ENCODE measurements at regions of chr19 and their contacts with region 1.

Region 1: GRCh38 chr19:18304458-18305310 is 18.2 kb downstream of the LSM4 start:
- DNase-seq: peak; percentile 80
- ATAC-seq: peak; percentile 87
- H3K4me3 ChIP-seq: peak overlapping the region; percentile 60 to 77 (median 61)
- H3K27ac ChIP-seq: peak overlapping the region; percentile 86
- H3K4me1 ChIP-seq: peaks cover 56% of the 10 kb centered on the region
- H3K27me3 ChIP-seq: no peaks in the 10 kb centered on the region
- CTCF ChIP-seq: peak; percentile 61
- EP300 ChIP-seq: peak in 1 of 2 experiments; percentile 35; a peak in 1 of 4 replicates
- POLR2A ChIP-seq: peak; percentile 70 to 72
- RAD21 ChIP-seq: no peak

Region 2: GRCh38 chr19:17847538-17848366 is 456.9 kb before region 1 on chr19 and contains the start of gene JAK3:
- CTCF ChIA-PET with region 1: no interaction called
- POLR2A ChIA-PET with region 1: no interaction called
- in situ Hi-C with region 1: no loop called
- intact Hi-C with region 1: no loop called
- DNase-seq: peak; percentile 59
- ATAC-seq: peak; percentile 83
- H3K4me3 ChIP-seq: peak within 1 kb of the TSS; percentile 50 to 64 (median 60)
- H3K27ac ChIP-seq: peak within 1 kb of the TSS; percentile 67
- H3K4me1 ChIP-seq: peaks cover 43% of the 10 kb centered on the region
- H3K27me3 ChIP-seq: no peaks in the 10 kb centered on the region; a peak in 1 of 5 replicates
- CTCF ChIP-seq: peak; percentile 16; the same call in 1 of the 2 replicates
- EP300 ChIP-seq: 0 out of 4 replicates have a peak, but pooled peaks of 1 of the 2 experiments have one; percentile 48
- POLR2A ChIP-seq: peak; percentile 22 to 79; a peak in 3 of 4 replicates
- RAD21 ChIP-seq: no peak
- total RNA-seq, gene JAK3: 2.8 and 3.4 TPM in 2 replicates

Region 3: DNA sequence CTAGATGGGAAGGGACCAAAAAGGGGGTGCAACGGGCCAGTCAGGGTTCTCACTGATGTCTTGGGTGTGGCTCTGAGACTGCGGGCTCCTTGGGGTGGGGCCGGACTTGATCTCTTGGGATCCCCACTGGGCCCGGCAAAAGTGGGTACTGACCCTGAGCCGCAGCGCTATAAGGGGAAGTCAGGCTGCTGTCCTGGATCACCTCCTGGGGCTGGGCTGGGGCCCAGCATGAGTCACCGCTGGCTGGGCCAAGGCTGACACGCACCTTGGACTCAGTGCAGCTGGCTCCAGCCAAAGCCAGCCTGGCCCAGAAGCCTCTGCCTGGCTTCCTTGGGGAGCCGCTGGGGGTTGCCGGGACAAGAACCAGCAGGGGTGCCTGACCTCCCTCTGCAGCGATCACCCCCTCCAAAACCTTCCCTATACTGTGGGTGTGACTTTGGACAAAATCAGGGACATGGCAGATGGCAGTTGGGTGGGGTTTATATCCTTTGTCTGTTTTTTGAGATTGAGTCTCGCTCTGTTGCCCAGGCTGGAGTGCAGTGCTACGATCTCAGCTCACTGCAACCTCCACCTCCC is 29.8 kb before region 1 on chr19:
- CTCF ChIA-PET with region 1: interaction called, 3 read pairs
- POLR2A ChIA-PET with region 1: interaction called, 187 read pairs
- in situ Hi-C with region 1: no loop called
- intact Hi-C with region 1: no loop called
- DNase-seq: peak; percentile 82
- ATAC-seq: peak; percentile 84
- H3K4me3 ChIP-seq: peak overlapping the region in 2 of 3 experiments; percentile 23 to 50; a peak in 3 of 6 replicates
- H3K27ac ChIP-seq: peak overlapping the region; percentile 73
- H3K4me1 ChIP-seq: peaks cover 66% of the 10 kb centered on the region
- H3K27me3 ChIP-seq: no peaks in the 10 kb centered on the region
- CTCF ChIP-seq: peak; percentile 42
- EP300 ChIP-seq: peak; percentile 44 to 61; a peak in 3 of 4 replicates
- POLR2A ChIP-seq: peak in 1 of 2 experiments; percentile 75
- RAD21 ChIP-seq: peak; percentile 39

Region 4: GRCh38 chr19:18291590-18292461 is 12.9 kb before region 1 on chr19:
- CTCF ChIA-PET with region 1: no interaction called
- POLR2A ChIA-PET with region 1: interaction called, 51 read pairs
- in situ Hi-C with region 1: no loop called
- intact Hi-C with region 1: no loop called
- DNase-seq: peak; percentile 51
- ATAC-seq: peak; percentile 67
- H3K4me3 ChIP-seq: peak overlapping the region; percentile 59 to 79 (median 63)
- H3K27ac ChIP-seq: peak overlapping the region; percentile 26
- H3K4me1 ChIP-seq: peaks cover 74% of the 10 kb centered on the region
- H3K27me3 ChIP-seq: no peaks in the 10 kb centered on the region
- CTCF ChIP-seq: no peak
- EP300 ChIP-seq: peak in 1 of 2 experiments; percentile 13; a peak in 1 of 4 replicates
- POLR2A ChIP-seq: no peak
- RAD21 ChIP-seq: 0 out of 2 replicates have a peak, but pooled peaks have one; percentile 4

Region 5: GRCh38 chr19:18322759-18323460 is 18.2 kb after region 1 on chr19 and contains the start of gene LSM4:
- CTCF ChIA-PET with region 1: interaction called, 3 read pairs
- POLR2A ChIA-PET with region 1: interaction called, 251 read pairs
- in situ Hi-C with region 1: no loop called
- intact Hi-C with region 1: loop called (anchors 1 kb)
- DNase-seq: peak; percentile 95
- ATAC-seq: peak; percentile 88
- H3K4me3 ChIP-seq: peak within 1 kb of the TSS; percentile 69 to 80 (median 72)
- H3K27ac ChIP-seq: peak within 1 kb of the TSS; percentile 84
- H3K4me1 ChIP-seq: peaks cover 73% of the 10 kb centered on the region
- H3K27me3 ChIP-seq: no peaks in the 10 kb centered on the region
- CTCF ChIP-seq: peak; percentile 59
- EP300 ChIP-seq: no peak
- POLR2A ChIP-seq: peak; percentile 66 to 69
- RAD21 ChIP-seq: peak; percentile 51
- total RNA-seq, gene LSM4: 166 and 188 TPM in 2 replicates

Region 6: DNA sequence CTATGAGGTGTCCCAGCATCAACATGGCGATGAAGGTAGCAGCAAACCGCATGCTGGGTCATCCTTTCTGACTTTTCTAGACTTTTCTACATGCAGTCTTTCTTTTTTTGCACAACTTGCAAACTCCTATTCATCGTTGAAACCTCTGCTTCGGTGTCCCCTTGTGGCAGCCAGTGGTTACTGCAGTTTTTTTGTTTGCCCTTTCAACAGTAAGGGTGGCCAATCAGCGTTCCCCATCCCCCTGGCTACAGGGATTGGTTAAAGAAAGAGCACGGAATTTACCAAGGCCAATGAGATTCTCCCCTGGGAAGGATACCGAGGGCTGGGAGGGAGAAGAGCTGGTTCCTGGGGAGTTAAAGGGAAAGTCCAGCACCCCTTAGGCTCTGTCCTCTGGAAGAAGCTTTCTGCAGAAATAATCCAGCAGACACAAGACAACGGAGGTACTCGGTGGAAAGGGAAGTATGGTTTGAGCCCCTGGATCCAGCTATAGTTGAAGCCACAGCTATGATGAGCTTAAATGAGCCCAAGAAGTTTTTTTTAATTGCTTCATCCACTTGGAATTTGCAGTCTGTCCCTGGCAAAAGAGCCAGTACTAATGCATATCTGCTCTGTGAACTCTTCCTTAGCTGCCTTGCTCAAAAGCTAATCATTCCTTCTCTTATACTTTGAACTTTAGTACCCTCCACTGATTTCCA is 23.8 kb after region 1 on chr19:
- CTCF ChIA-PET with region 1: interaction called, 3 read pairs
- POLR2A ChIA-PET with region 1: interaction called, 14 read pairs
- in situ Hi-C with region 1: no loop called
- intact Hi-C with region 1: no loop called
- DNase-seq: peak; percentile 97
- ATAC-seq: peak; percentile 92
- H3K4me3 ChIP-seq: peak overlapping the region; percentile 9 to 59 (median 29)
- H3K27ac ChIP-seq: peak overlapping the region; percentile 69
- H3K4me1 ChIP-seq: peaks cover 73% of the 10 kb centered on the region
- H3K27me3 ChIP-seq: no peaks in the 10 kb centered on the region
- CTCF ChIP-seq: peak; percentile 90
- EP300 ChIP-seq: 0 out of 4 replicates have a peak, but pooled peaks of 1 of the 2 experiments have one; percentile 9
- POLR2A ChIP-seq: peak in 1 of 2 experiments; percentile 71; a peak in 2 of 4 replicates
- RAD21 ChIP-seq: peak; percentile 58; the same call in 1 of the 2 replicates

Region 7: GRCh38 chr19:18340190-18340989 is 35.7 kb after region 1 on chr19 and contains the start of gene PGPEP1:
- CTCF ChIA-PET with region 1: no interaction called
- POLR2A ChIA-PET with region 1: interaction called, 13 read pairs
- in situ Hi-C with region 1: no loop called
- intact Hi-C with region 1: no loop called
- DNase-seq: no peak
- ATAC-seq: peak; percentile 46
- H3K4me3 ChIP-seq: peak within 1 kb of the TSS; percentile 76 to 97 (median 89)
- H3K27ac ChIP-seq: peak within 1 kb of the TSS; percentile 88
- H3K4me1 ChIP-seq: peaks cover 67% of the 10 kb centered on the region
- H3K27me3 ChIP-seq: no peaks in the 10 kb centered on the region
- CTCF ChIP-seq: no peak
- EP300 ChIP-seq: no peak; a peak in 1 of 4 replicates
- POLR2A ChIP-seq: peak in 1 of 2 experiments; percentile 67; a peak in 2 of 4 replicates
- RAD21 ChIP-seq: no peak
- total RNA-seq, gene PGPEP1: 56.6 and 57.7 TPM in 2 replicates

Measured in HepG2 (cell line).